Posterior vena cava (tissue), 2 donors: ENCODE measurements at regions of chr9 and their contacts with region 1.

Region 1: GRCh38 chr9:70883056-70883455 is 238.4 kb downstream of the TRPM3 start:
- DNase-seq: no peak

Region 2: GRCh38 chr9:70639853-70640814 is 242.9 kb before region 1 on chr9:
- intact Hi-C with region 1: loop called in 1 of 2 experiments (anchors 10 kb)
- DNase-seq: no peak

Region 3: DNA sequence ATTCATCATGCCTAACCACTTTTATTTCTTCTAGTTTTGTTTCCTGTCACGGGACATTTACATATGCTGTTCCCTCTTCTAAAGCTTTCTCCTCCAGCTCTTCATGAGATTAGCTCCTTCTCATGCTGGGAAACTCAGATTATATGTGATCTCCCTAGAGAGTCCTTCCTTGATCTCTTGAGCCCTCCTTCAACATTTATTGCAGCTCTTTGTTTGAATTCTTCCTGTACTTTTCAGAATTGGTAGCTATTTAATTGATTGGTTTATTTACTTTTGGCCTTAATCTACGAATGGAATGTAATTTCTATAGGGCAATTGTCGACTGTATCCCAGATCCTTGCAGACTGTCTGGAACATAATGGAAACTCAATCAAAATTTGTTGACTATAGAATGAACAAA is 248.1 kb after region 1 on chr9:
- intact Hi-C with region 1: loop called in 1 of 2 experiments (anchors 5 kb)
- DNase-seq: no peak